Panc1 (cell line): ENCODE measurements at regions of chr9 and their contacts with region 1.

Region 1: GRCh38 chr9:73459817-73460216 is 308.2 kb downstream of the ANXA1 start:
- DNase-seq: no peak
- ATAC-seq: no peak
- H3K4me3 ChIP-seq: no peak overlapping the region
- H3K27ac ChIP-seq: no peak overlapping the region
- H3K4me1 ChIP-seq: no peaks in the 10 kb centered on the region
- H3K27me3 ChIP-seq: no peaks in the 10 kb centered on the region
- CTCF ChIP-seq: no peak

Region 2: GRCh38 chr9:73038613-73039012 is 421.2 kb before region 1 on chr9:
- CTCF ChIA-PET with region 1: no interaction called
- POLR2A ChIA-PET with region 1: no interaction called
- in situ Hi-C with region 1: no loop called
- intact Hi-C with region 1: no loop called
- DNase-seq: no peak
- ATAC-seq: no peak
- H3K4me3 ChIP-seq: no peak overlapping the region
- H3K27ac ChIP-seq: no peak overlapping the region
- H3K4me1 ChIP-seq: no peaks in the 10 kb centered on the region
- H3K27me3 ChIP-seq: no peaks in the 10 kb centered on the region
- CTCF ChIP-seq: no peak

Region 3: GRCh38 chr9:73515216-73515615 is 55.4 kb after region 1 on chr9:
- CTCF ChIA-PET with region 1: no interaction called
- POLR2A ChIA-PET with region 1: no interaction called
- in situ Hi-C with region 1: no loop called
- intact Hi-C with region 1: loop called (anchors 10 kb)
- DNase-seq: no peak
- ATAC-seq: no peak
- H3K4me3 ChIP-seq: no peak overlapping the region
- H3K27ac ChIP-seq: no peak overlapping the region
- H3K4me1 ChIP-seq: no peaks in the 10 kb centered on the region
- H3K27me3 ChIP-seq: no peaks in the 10 kb centered on the region
- CTCF ChIP-seq: no peak